IMR-90 (cell line): ENCODE measurements at regions of chr2 and their contacts with region 1.

Region 1: GRCh38 chr2:142877216-142877756 is at the start of gene KYNU:
- DNase-seq: peak; percentile 33
- ATAC-seq: peak; percentile 27
- H3K4me3 ChIP-seq: no peak within 1 kb of the TSS; the same call in 1 of the 2 replicates
- H3K27ac ChIP-seq: no peak within 1 kb of the TSS
- H3K4me1 ChIP-seq: peaks cover 6% of the 10 kb centered on the region
- H3K27me3 ChIP-seq: no peaks in the 10 kb centered on the region
- CTCF ChIP-seq: no peak
- POLR2A ChIP-seq: no peak
- RAD21 ChIP-seq: no peak
- total RNA-seq, gene KYNU: 2.2 and 2.9 TPM in 2 replicates

Region 2: DNA sequence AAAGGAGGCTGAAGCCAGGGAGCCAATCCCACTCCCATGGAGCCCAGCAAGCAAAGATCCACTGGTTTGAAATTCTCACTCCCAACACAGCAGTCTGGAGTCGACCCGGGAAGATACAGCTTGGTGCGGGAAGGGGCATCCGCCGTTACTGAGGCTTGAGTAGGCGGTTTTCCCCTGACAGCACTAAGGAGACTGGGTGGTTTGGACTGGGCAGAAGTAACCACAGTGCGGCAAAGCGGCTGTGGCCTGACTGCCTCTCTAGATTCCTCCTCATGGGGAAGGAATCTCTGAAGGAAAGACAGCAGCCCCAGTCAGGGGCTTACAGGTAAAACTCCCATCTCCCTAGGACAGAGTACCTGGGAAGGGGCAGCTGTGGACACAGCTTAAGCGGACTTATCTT is 261.4 kb before region 1 on chr2:
- CTCF ChIA-PET with region 1: no interaction called
- POLR2A ChIA-PET with region 1: no interaction called
- dilution Hi-C with region 1: no loop called
- in situ Hi-C with region 1: no loop called
- intact Hi-C with region 1: no loop called
- DNase-seq: no peak
- ATAC-seq: no peak
- H3K4me3 ChIP-seq: no peak overlapping the region
- H3K27ac ChIP-seq: no peak overlapping the region
- H3K4me1 ChIP-seq: no peaks in the 10 kb centered on the region
- H3K27me3 ChIP-seq: peaks cover 3% of the 10 kb centered on the region; the same call in 1 of the 2 replicates
- CTCF ChIP-seq: no peak
- POLR2A ChIP-seq: no peak
- RAD21 ChIP-seq: no peak

Region 3: DNA sequence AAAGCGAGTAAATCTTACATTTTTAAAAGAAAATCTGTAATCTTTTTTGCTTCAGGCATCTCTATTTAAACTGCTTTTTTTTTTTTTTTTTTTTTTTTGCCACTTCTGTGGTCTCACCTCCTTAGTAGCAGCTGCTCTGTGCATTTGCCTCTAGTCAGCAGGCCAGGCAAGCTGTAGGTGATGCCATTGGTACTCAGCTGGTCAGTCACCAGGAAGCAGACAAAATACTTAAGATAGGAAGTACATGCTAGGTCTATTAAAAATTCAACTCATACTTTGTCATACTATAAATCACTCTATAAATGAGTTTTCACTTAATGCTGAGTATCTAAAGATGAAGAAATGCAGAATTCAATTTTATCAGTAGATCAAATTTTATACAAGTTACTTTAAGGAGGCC is 83.9 kb after region 1 on chr2:
- CTCF ChIA-PET with region 1: no interaction called
- POLR2A ChIA-PET with region 1: no interaction called
- dilution Hi-C with region 1: no loop called
- in situ Hi-C with region 1: no loop called
- intact Hi-C with region 1: loop called (anchors 5 kb)
- DNase-seq: no peak
- ATAC-seq: no peak
- H3K4me3 ChIP-seq: no peak overlapping the region
- H3K27ac ChIP-seq: no peak overlapping the region
- H3K4me1 ChIP-seq: 0 out of 2 replicates have a peak, but pooled peaks cover 1% of the 10 kb centered on the region
- H3K27me3 ChIP-seq: no peaks in the 10 kb centered on the region
- CTCF ChIP-seq: no peak
- POLR2A ChIP-seq: no peak
- RAD21 ChIP-seq: no peak

Region 4: GRCh38 chr2:142980561-142981378 is 103.5 kb after region 1 on chr2:
- CTCF ChIA-PET with region 1: no interaction called
- POLR2A ChIA-PET with region 1: no interaction called
- dilution Hi-C with region 1: no loop called
- in situ Hi-C with region 1: no loop called
- intact Hi-C with region 1: loop called (anchors 5 kb)
- DNase-seq: peak; percentile 75
- ATAC-seq: peak; percentile 82
- H3K4me3 ChIP-seq: no peak overlapping the region
- H3K27ac ChIP-seq: no peak overlapping the region
- H3K4me1 ChIP-seq: no peaks in the 10 kb centered on the region
- H3K27me3 ChIP-seq: no peaks in the 10 kb centered on the region
- CTCF ChIP-seq: peak; percentile 65
- POLR2A ChIP-seq: no peak
- RAD21 ChIP-seq: peak; percentile 67